Activated CD4-positive, alpha-beta T cell treated with anti-CD3 and anti-CD28 coated beads for 36 hours (primary cell): ENCODE measurements at regions of chr6 and their contacts with region 1.

Region 1: GRCh38 chr6:30828027-30828960 is 56.0 kb upstream of the DDR1 start:
- DNase-seq: peak; percentile 92
- ATAC-seq: peak; percentile 83
- H3K4me3 Mint-ChIP-seq: peak overlapping the region; percentile 66
- H3K27ac Mint-ChIP-seq: peak overlapping the region; percentile 97
- H3K4me1 Mint-ChIP-seq: peaks cover 65% of the 10 kb centered on the region
- H3K27me3 Mint-ChIP-seq: no peaks in the 10 kb centered on the region

Region 2: DNA sequence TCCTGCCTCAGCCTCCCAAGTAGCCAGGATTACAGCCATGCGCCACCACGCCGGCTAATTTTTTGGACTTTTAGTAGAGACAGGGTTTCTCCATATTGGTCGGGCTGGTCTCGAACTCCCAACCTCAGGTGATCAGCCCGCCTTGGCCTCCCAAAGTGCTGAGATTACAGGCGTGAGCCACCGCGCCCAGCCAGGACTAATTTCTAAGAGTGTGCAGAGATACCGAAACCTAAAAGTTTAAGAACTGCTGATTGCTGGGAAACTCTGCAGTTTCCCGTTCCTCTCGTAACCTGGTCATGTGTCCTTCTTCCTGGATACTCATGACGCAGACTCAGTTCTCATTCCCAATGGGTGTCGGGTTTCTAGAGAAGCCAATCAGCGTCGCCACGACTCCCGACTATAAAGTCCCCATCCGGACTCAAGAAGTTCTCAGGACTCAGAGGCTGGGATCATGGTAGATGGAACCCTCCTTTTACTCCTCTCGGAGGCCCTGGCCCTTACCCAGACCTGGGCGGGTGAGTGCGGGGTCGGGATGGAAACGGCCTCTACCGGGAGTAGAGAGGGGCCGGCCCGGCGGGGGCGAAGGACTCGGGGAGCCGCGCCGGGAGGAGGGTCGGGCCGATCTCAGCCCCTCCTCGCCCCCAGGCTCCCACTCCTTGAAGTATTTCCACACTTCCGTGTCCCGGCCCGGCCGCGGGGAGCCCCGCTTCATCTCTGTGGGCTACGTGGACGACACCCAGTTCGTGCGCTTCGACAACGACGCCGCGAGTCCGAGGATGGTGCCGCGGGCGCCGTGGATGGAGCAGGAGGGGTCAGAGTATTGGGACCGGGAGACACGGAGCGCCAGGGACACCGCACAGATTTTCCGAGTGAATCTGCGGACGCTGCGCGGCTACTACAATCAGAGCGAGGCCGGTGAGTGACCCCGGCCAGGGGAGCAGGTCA is 338.9 kb before region 1 on chr6 and contains the start of gene HLA-E:
- CTCF ChIA-PET with region 1: no interaction called
- POLR2A ChIA-PET with region 1: no interaction called
- intact Hi-C with region 1: no loop called
- DNase-seq: peak; percentile 92
- ATAC-seq: peak; percentile 78
- H3K4me3 Mint-ChIP-seq: peak within 1 kb of the TSS; percentile 95
- H3K27ac Mint-ChIP-seq: peak within 1 kb of the TSS; percentile 98
- H3K4me1 Mint-ChIP-seq: peaks cover 43% of the 10 kb centered on the region
- H3K27me3 Mint-ChIP-seq: no peaks in the 10 kb centered on the region
- total RNA-seq, gene HLA-E: 451 to 502 TPM

Region 3: GRCh38 chr6:30814136-30815040 is 13.9 kb before region 1 on chr6:
- CTCF ChIA-PET with region 1: interaction called, 13 read pairs
- POLR2A ChIA-PET with region 1: interaction called, 4 read pairs
- intact Hi-C with region 1: no loop called
- DNase-seq: peak; percentile 79
- ATAC-seq: peak; percentile 40
- H3K4me3 Mint-ChIP-seq: peak overlapping the region; percentile 38
- H3K27ac Mint-ChIP-seq: peak overlapping the region; percentile 96
- H3K4me1 Mint-ChIP-seq: peaks cover 91% of the 10 kb centered on the region
- H3K27me3 Mint-ChIP-seq: no peaks in the 10 kb centered on the region

Region 4: GRCh38 chr6:30877419-30878371 is 49.4 kb after region 1 on chr6:
- CTCF ChIA-PET with region 1: interaction called, 13 read pairs
- POLR2A ChIA-PET with region 1: no interaction called
- intact Hi-C with region 1: loop called (anchors 1 kb)
- DNase-seq: peak; percentile 86
- ATAC-seq: peak; percentile 84
- H3K4me3 Mint-ChIP-seq: peak overlapping the region; percentile 64
- H3K27ac Mint-ChIP-seq: peak overlapping the region; percentile 85
- H3K4me1 Mint-ChIP-seq: peaks cover 24% of the 10 kb centered on the region
- H3K27me3 Mint-ChIP-seq: no peaks in the 10 kb centered on the region

Region 5: DNA sequence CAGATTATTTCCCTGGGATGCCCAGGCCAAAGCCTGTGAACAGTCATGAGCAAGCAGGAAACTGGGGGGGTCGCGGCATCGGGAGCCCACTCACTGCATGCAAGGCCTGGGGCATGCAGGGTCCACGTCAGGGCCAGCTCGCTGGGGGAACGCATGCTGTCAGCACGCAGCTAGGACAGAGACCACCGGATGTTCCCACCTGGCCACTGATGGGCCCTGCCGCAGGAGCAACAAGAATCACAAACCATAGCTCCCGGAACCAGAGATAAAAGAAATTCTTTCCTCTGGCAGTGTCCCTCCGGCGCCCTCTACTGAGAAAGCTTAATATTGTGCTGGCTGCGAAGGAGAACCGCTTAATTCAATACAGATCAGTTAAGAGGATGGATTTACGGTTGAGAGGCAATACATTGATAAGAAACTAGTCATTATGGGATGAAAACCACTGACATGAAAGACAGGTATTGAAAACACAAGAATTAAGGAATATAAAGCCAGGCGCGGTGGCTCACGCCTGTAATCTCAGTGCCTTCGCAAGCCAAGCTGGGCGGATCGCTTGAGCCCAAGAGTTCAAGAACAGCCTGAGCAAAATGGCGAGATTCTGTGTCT is 251.5 kb after region 1 on chr6:
- CTCF ChIA-PET with region 1: interaction called, 28 read pairs
- POLR2A ChIA-PET with region 1: interaction called, 4 read pairs
- intact Hi-C with region 1: no loop called
- DNase-seq: peak; percentile 82
- ATAC-seq: peak; percentile 91
- H3K4me3 Mint-ChIP-seq: peak overlapping the region; percentile 49
- H3K27ac Mint-ChIP-seq: no peak overlapping the region
- H3K4me1 Mint-ChIP-seq: peaks cover 13% of the 10 kb centered on the region
- H3K27me3 Mint-ChIP-seq: no peaks in the 10 kb centered on the region